Endothelial cell of umbilical vein (primary cell): ENCODE measurements at regions of chr1 and their contacts with region 1.

Region 1: DNA sequence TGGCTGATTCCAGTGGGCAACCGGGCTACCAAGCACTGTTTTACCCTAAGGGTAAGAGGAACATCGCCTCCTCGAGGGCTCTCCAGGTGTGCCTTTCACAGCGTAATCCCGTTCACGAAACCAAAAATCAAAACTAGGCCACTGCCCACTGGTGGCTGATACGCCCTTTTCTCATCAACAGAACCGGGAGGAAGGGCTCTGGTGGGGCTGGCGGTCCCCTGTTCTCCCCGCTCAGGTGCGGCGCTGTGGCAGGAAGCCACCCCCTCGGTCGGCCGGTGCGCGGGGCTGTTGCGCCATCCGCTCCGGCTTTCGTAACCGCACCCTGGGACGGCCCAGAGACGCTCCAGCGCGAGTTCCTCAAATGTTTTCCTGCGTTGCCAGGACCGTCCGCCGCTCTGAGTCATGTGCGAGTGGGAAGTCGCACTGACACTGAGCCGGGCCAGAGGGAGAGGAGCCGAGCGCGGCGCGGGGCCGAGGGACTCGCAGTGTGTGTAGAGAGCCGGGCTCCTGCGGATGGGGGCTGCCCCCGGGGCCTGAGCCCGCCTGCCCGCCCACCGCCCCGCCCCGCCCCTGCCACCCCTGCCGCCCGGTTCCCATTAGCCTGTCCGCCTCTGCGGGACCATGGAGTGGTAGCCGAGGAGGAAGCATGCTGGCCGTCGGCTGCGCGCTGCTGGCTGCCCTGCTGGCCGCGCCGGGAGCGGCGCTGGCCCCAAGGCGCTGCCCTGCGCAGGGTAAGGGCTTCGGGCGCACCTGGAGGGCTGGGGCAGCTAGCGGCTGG is at the start of gene IL6R:
- DNase-seq: peak; percentile 83
- H3K4me3 ChIP-seq: peak within 1 kb of the TSS; percentile 6 to 49 (median 36)
- H3K27ac ChIP-seq: peak within 1 kb of the TSS; percentile 18
- H3K4me1 ChIP-seq: peaks cover 13% of the 10 kb centered on the region
- H3K27me3 ChIP-seq: no peaks in the 10 kb centered on the region
- CTCF ChIP-seq: peak; percentile 28 to 42
- POLR2A ChIP-seq: no peak
- total RNA-seq, gene IL6R: 3.3 and 4.8 TPM in 2 replicates

Region 2: DNA sequence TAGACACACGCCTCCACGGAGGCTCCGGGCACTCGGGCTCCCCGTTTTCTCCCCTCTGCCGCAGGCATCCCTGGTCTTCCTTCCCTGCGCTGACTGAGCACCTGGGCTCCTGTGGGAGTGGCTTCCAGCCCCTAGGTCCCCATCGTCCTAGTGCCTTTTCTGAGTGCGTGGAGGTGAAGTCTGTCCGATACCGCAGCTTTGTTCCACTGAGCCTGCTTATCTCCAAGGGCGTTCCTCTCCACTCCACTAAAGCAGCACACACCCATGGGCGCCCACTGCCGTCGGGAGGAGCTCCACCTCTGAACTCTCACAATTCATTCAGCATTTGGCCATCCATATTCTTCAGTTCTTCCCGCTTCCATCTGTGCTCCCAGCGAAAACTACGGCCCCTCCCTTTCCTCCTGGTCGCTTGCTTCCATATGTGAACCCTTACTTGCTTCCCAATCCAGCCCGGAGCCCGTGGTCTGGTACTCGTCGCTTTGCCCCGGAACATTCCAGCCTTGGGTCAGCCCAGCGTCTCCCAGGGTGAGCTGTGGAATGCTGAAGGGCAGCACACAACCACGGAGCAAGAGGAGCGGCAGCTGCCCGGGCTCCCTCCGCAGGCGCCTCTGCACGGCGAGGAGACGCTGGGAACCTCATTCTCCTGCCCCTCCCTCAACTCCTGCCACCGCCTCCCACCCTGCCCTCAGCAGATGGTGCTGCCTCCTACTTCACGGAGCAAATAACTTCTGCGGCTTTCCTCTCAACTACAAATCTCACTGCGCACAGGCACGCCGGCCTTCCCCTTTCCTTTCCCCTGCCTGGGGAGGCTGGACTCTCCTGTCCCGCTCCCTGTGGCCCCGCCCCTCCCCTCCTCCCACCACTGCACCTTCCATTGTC is 52.4 kb before region 1 on chr1:
- CTCF ChIA-PET with region 1: interaction called, 7 read pairs
- POLR2A ChIA-PET with region 1: no interaction called
- dilution Hi-C with region 1: no loop called
- intact Hi-C with region 1: loop called (anchors 1 kb)
- DNase-seq: peak; percentile 56
- H3K4me3 ChIP-seq: peak overlapping the region in 2 of 3 experiments; percentile 19 to 46
- H3K27ac ChIP-seq: no peak overlapping the region
- H3K4me1 ChIP-seq: peaks cover 14% of the 10 kb centered on the region
- H3K27me3 ChIP-seq: no peaks in the 10 kb centered on the region
- CTCF ChIP-seq: peak in 1 of 2 donors; percentile 1
- POLR2A ChIP-seq: no peak

Region 3: GRCh38 chr1:154419620-154420571 is 14.7 kb after region 1 on chr1:
- CTCF ChIA-PET with region 1: interaction called, 20 read pairs
- POLR2A ChIA-PET with region 1: interaction called, 6 read pairs
- dilution Hi-C with region 1: no loop called
- intact Hi-C with region 1: loop called (anchors 1 kb)
- DNase-seq: peak; percentile 96
- H3K4me3 ChIP-seq: no peak overlapping the region
- H3K27ac ChIP-seq: peak overlapping the region; percentile 89
- H3K4me1 ChIP-seq: peaks cover 43% of the 10 kb centered on the region
- H3K27me3 ChIP-seq: no peaks in the 10 kb centered on the region
- CTCF ChIP-seq: no peak
- POLR2A ChIP-seq: no peak

Region 4: GRCh38 chr1:154442006-154442740 is 37.0 kb after region 1 on chr1:
- CTCF ChIA-PET with region 1: interaction called, 5 read pairs
- POLR2A ChIA-PET with region 1: interaction called, 6 read pairs
- dilution Hi-C with region 1: no loop called
- intact Hi-C with region 1: loop called (anchors 2 kb)
- DNase-seq: no peak
- H3K4me3 ChIP-seq: no peak overlapping the region
- H3K27ac ChIP-seq: no peak overlapping the region
- H3K4me1 ChIP-seq: peaks cover 7% of the 10 kb centered on the region
- H3K27me3 ChIP-seq: no peaks in the 10 kb centered on the region
- CTCF ChIP-seq: peak; percentile 24 to 56
- POLR2A ChIP-seq: no peak

Region 5: DNA sequence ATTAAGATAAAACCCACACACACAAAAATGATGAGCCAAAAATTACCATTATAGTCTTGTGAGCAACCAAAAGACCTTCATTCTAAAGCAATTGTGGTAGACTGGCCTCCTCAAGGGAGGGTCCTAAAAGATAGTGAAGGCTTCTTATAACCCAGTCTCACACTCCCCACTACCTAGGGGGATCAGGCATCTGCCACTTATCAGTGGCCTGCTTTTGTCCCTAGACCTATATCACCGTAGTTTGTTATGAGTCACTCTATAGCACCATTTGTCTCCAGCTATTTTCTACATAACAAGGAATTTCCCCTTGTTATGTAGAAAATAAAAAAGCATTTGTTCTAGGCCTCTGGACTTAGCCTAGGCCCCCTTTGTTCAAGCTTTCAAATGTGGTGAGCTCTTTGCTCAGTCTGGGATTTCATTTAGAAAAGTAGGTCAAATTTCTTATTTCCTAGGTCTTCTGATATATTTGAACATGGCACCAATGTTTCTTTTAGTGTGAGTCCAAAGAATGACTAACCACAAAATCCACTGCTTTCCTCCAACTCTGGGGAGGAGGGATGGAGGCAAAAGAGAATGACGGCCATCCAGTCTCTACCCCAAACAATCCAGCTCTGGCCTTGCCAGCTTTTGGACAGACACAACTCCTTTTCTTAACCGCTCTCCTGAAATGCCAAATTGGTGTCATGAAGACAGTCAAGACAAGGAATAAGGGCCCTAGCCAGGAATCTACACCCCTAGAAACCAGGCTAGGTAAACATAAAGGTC is 193.9 kb after region 1 on chr1:
- CTCF ChIA-PET with region 1: no interaction called
- POLR2A ChIA-PET with region 1: no interaction called
- dilution Hi-C with region 1: no loop called
- intact Hi-C with region 1: no loop called
- DNase-seq: peak; percentile 17
- H3K4me3 ChIP-seq: no peak overlapping the region
- H3K27ac ChIP-seq: peak overlapping the region; percentile 27
- H3K4me1 ChIP-seq: peaks cover 3% of the 10 kb centered on the region
- H3K27me3 ChIP-seq: no peaks in the 10 kb centered on the region
- CTCF ChIP-seq: no peak
- POLR2A ChIP-seq: no peak